ENCODE measurements at regions of chr12 and their contacts with region 1.

Region 1: GRCh38 chr12:88993651-88994050 is 358.6 kb downstream of the DUSP6 start:
- DNase-seq: peak; percentile 63
- ATAC-seq: peak; percentile 78
- H3K4me3 ChIP-seq: no peak overlapping the region
- H3K27ac ChIP-seq: peak overlapping the region; percentile 62
- H3K4me1 ChIP-seq: peaks cover 16 to 45% of the 10 kb centered on the region in 2 experiments; a peak in 3 of 4 replicates
- H3K27me3 ChIP-seq: no peaks in the 10 kb centered on the region
- CTCF ChIP-seq: peak; percentile 30 to 68 (median 52); a peak in 4 of 6 replicates
- POLR2A ChIP-seq: no peak
- RAD21 ChIP-seq: peak; percentile 91

Region 2: DNA sequence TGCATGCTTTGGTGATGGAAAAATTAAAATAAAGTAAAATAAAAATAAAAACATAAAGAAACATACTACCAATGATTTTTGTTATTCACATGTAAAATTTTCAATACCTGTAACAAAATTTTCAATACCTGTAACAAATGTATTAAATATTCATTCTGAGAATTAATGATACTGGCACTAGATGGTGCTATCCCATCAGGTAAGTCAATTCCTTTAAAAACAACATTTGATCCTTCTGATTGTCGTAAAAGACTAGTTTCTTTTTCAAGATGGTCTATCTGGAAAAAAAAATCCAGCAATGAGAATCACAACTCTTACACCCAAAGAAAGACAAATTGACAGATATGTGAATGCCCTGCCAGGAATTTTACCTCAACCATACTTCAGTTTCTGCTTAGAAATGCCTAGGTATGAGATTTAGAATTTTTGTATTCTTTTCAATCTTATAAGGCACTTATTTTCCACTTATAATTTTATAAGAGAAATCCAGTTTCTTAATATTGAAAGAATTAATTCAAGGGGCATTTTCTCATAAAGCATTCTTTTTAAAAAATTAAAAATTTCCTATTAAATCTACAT is 882.5 kb before region 1 on chr12:
- CTCF ChIA-PET with region 1: interaction called, 6 read pairs
- POLR2A ChIA-PET with region 1: no interaction called
- RAD21 ChIA-PET with region 1: no interaction called
- intact Hi-C with region 1: loop called (anchors 5 kb)
- DNase-seq: peak; percentile 38
- ATAC-seq: no peak
- H3K4me3 ChIP-seq: no peak overlapping the region
- H3K27ac ChIP-seq: no peak overlapping the region; the same call in 1 of the 2 replicates
- H3K4me1 ChIP-seq: 0 out of 4 replicates have a peak, but pooled peaks cover 0 to 3% of the 10 kb centered on the region in 2 experiments
- H3K27me3 ChIP-seq: no peaks in the 10 kb centered on the region
- CTCF ChIP-seq: peak; percentile 31 to 57 (median 35); a peak in 4 of 6 replicates
- POLR2A ChIP-seq: no peak
- RAD21 ChIP-seq: peak; percentile 82

Region 3: GRCh38 chr12:88153959-88154358 is 839.7 kb before region 1 on chr12:
- CTCF ChIA-PET with region 1: interaction called, 4 read pairs
- POLR2A ChIA-PET with region 1: no interaction called
- RAD21 ChIA-PET with region 1: no interaction called
- intact Hi-C with region 1: loop called (anchors 2 kb)
- DNase-seq: peak; percentile 37
- ATAC-seq: no peak
- H3K4me3 ChIP-seq: no peak overlapping the region
- H3K27ac ChIP-seq: no peak overlapping the region
- H3K4me1 ChIP-seq: no peaks in the 10 kb centered on the region
- H3K27me3 ChIP-seq: no peaks in the 10 kb centered on the region
- CTCF ChIP-seq: peak in 2 of 3 experiments; percentile 27 to 45; a peak in 2 of 6 replicates
- POLR2A ChIP-seq: no peak
- RAD21 ChIP-seq: peak; percentile 75

Region 4: GRCh38 chr12:88633312-88633711 is 360.3 kb before region 1 on chr12:
- CTCF ChIA-PET with region 1: interaction called, 7 read pairs
- POLR2A ChIA-PET with region 1: no interaction called
- RAD21 ChIA-PET with region 1: no interaction called
- intact Hi-C with region 1: loop called (anchors 5 kb)
- DNase-seq: no peak
- ATAC-seq: no peak
- H3K4me3 ChIP-seq: no peak overlapping the region
- H3K27ac ChIP-seq: no peak overlapping the region
- H3K4me1 ChIP-seq: peaks cover 0 to under 1% of the 10 kb centered on the region in 2 experiments; a peak in 2 of 4 replicates
- H3K27me3 ChIP-seq: no peaks in the 10 kb centered on the region
- CTCF ChIP-seq: peak in 2 of 3 experiments; percentile 32 to 46; a peak in 3 of 6 replicates
- POLR2A ChIP-seq: no peak
- RAD21 ChIP-seq: peak; percentile 39

Region 5: GRCh38 chr12:88781909-88782308 is 211.7 kb before region 1 on chr12:
- CTCF ChIA-PET with region 1: no interaction called
- POLR2A ChIA-PET with region 1: no interaction called
- RAD21 ChIA-PET with region 1: no interaction called
- intact Hi-C with region 1: no loop called
- DNase-seq: no peak
- ATAC-seq: no peak
- H3K4me3 ChIP-seq: no peak overlapping the region
- H3K27ac ChIP-seq: no peak overlapping the region
- H3K4me1 ChIP-seq: peaks cover 0 to 4% of the 10 kb centered on the region in 2 experiments; a peak in 1 of 4 replicates
- H3K27me3 ChIP-seq: no peaks in the 10 kb centered on the region
- CTCF ChIP-seq: no peak
- POLR2A ChIP-seq: no peak
- RAD21 ChIP-seq: no peak

Region 6: GRCh38 chr12:88946372-88946997 is 47.2 kb before region 1 on chr12:
- CTCF ChIA-PET with region 1: interaction called, 13 read pairs
- POLR2A ChIA-PET with region 1: interaction called, 6 read pairs
- RAD21 ChIA-PET with region 1: interaction called in 1 of 2 experiments, 3 read pairs
- intact Hi-C with region 1: no loop called
- DNase-seq: peak; percentile 64
- ATAC-seq: peak; percentile 73
- H3K4me3 ChIP-seq: no peak overlapping the region
- H3K27ac ChIP-seq: peak overlapping the region; percentile 87
- H3K4me1 ChIP-seq: peaks cover 84 to 88% of the 10 kb centered on the region in 2 experiments
- H3K27me3 ChIP-seq: no peaks in the 10 kb centered on the region
- CTCF ChIP-seq: peak in 2 of 3 experiments; percentile 42 to 50; a peak in 4 of 6 replicates
- POLR2A ChIP-seq: no peak
- RAD21 ChIP-seq: no peak